HEK293 (cell line): ENCODE measurements at regions of chr1 and their contacts with region 1.

Region 1: GRCh38 chr1:55154616-55155015 is 60.5 kb downstream of the USP24 start:
- H3K4me3 ChIP-seq: no peak overlapping the region
- H3K27ac ChIP-seq: no peak overlapping the region
- H3K4me1 ChIP-seq: no peaks in the 10 kb centered on the region
- CTCF ChIP-seq: no peak

Region 2: GRCh38 chr1:55050283-55050682 is 104.3 kb before region 1 on chr1:
- CTCF ChIA-PET with region 1: no interaction called
- POLR2A ChIA-PET with region 1: no interaction called
- H3K4me3 ChIP-seq: no peak overlapping the region
- H3K27ac ChIP-seq: no peak overlapping the region
- H3K4me1 ChIP-seq: no peaks in the 10 kb centered on the region
- CTCF ChIP-seq: no peak

Region 3: DNA sequence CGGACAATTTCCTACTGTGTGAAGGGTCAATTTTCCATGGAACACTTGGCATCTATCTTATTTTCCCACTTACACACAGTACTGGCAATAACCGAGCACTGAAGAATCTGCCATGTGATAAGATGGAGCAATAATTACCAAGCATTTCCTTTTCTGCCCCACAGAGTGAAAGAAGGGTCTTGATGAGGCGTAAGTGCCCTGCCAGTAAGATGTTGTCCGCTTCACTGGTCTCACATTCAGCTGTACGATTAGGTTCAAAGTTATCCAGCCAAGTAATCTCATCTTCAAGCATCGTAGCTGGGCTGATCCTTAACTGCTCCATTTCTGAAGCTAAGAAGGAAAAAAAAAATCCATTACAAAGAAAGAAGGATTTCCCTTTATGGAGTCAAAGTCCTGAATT is 47.5 kb before region 1 on chr1:
- CTCF ChIA-PET with region 1: no interaction called
- POLR2A ChIA-PET with region 1: no interaction called
- H3K4me3 ChIP-seq: no peak overlapping the region
- H3K27ac ChIP-seq: no peak overlapping the region
- H3K4me1 ChIP-seq: no peaks in the 10 kb centered on the region
- CTCF ChIP-seq: no peak

Region 4: GRCh38 chr1:55140546-55140983 is 14.1 kb before region 1 on chr1:
- CTCF ChIA-PET with region 1: interaction called, 21 read pairs
- POLR2A ChIA-PET with region 1: no interaction called
- H3K4me3 ChIP-seq: no peak overlapping the region
- H3K27ac ChIP-seq: no peak overlapping the region
- H3K4me1 ChIP-seq: no peaks in the 10 kb centered on the region
- CTCF ChIP-seq: peak; percentile 43; the same call in 1 of the 2 replicates